Transverse colon (tissue), 4 donors: ENCODE measurements at regions of chr1 and their contacts with region 1.

Region 1: GRCh38 chr1:178725603-178726517 is 816 bp downstream of the RALGPS2 start:
- DNase-seq: peak; percentile 87
- H3K4me3 ChIP-seq: peak overlapping the region; percentile 44 to 99 (median 94)
- H3K27ac ChIP-seq: peak overlapping the region; percentile 86 to 98 (median 94)
- H3K4me1 ChIP-seq: peaks cover 0 to 32% (median 8%) of the 10 kb centered on the region in 4 donors
- H3K27me3 ChIP-seq: no peaks in the 10 kb centered on the region
- CTCF ChIP-seq: no peak
- EP300 ChIP-seq: no peak
- POLR2A ChIP-seq: peak; percentile 68

Region 2: DNA sequence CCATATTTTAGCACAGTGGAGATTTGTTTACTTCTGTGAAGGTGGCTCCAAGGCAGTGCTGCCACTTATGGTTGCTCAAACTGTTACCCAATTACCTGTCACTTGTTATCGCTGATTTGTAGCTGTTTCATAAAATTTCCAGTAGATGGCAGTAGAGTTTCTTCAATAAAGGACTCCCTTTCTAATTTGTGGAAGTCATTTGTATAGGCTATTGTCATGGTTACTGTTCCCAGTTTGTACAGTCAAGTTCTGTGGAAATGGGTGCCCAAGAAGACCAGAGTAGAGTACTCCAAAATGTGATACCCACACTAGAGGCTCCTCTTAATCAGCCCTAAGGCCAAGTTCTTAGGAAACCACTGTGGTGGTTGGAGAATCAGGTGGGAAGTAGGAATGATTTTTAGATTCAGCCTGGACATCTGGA is 415.2 kb before region 1 on chr1:
- in situ Hi-C with region 1: loop called in 1 of 4 experiments (anchors 25 kb)
- intact Hi-C with region 1: no loop called
- DNase-seq: no peak
- H3K4me3 ChIP-seq: no peak overlapping the region
- H3K27ac ChIP-seq: no peak overlapping the region
- H3K4me1 ChIP-seq: peaks cover 0 to 12% (median 8%) of the 10 kb centered on the region in 4 donors
- H3K27me3 ChIP-seq: no peaks in the 10 kb centered on the region
- CTCF ChIP-seq: peak; percentile 66 to 81 (median 74)
- EP300 ChIP-seq: no peak
- POLR2A ChIP-seq: no peak